Aorta (tissue), 5 donors: ENCODE measurements at regions of chr15 and their contacts with region 1.

Region 1: DNA sequence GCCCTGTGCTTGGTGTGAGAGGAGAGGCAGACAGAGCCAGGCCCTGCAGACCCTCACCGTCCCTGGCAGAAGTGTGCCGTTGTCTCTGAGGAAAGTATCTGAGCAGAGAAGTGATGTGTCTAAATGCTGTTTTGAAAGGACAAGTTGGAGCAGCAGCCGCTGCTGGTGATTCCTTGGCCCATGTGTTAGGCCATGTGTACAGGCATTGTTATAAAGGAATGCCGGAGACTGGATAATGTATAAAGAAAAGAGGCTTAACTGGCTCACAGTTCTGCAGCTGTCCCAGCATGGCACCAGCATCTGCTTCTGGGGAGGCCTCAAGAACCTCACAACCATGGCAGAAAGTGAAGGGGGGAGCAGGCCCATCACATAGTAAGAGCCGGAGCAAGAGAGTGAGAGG is 334.6 kb upstream of the ATP10A start:
- DNase-seq: no peak
- ATAC-seq: peak; percentile 9
- H3K4me3 ChIP-seq: no peak overlapping the region
- H3K27ac ChIP-seq: no peak overlapping the region
- H3K4me1 ChIP-seq: no peaks in the 10 kb centered on the region
- H3K27me3 ChIP-seq: no peaks in the 10 kb centered on the region

Region 2: GRCh38 chr15:26126070-26126469 is 71.6 kb before region 1 on chr15:
- intact Hi-C with region 1: loop called in 1 of 2 experiments (anchors 5 kb)
- DNase-seq: no peak
- ATAC-seq: no peak
- H3K4me3 ChIP-seq: no peak overlapping the region
- H3K27ac ChIP-seq: no peak overlapping the region
- H3K4me1 ChIP-seq: no peaks in the 10 kb centered on the region
- H3K27me3 ChIP-seq: peaks cover 0 to 2% of the 10 kb centered on the region in 2 donors

Region 3: GRCh38 chr15:26146199-26146598 is 51.5 kb before region 1 on chr15:
- intact Hi-C with region 1: loop called in 1 of 2 experiments (anchors 5 kb)
- DNase-seq: no peak
- ATAC-seq: no peak
- H3K4me3 ChIP-seq: no peak overlapping the region
- H3K27ac ChIP-seq: no peak overlapping the region
- H3K4me1 ChIP-seq: no peaks in the 10 kb centered on the region
- H3K27me3 ChIP-seq: no peaks in the 10 kb centered on the region